HepG2 (cell line): ENCODE measurements at regions of chr13 and their contacts with region 1.

Region 1: GRCh38 chr13:45623515-45624090 is 8.1 kb upstream of the ERICH6B start:
- DNase-seq: peak; percentile 19
- ATAC-seq: peak; percentile 67
- H3K4me3 ChIP-seq: no peak overlapping the region
- H3K27ac ChIP-seq: no peak overlapping the region
- H3K4me1 ChIP-seq: peaks cover 9% of the 10 kb centered on the region
- H3K27me3 ChIP-seq: peaks cover 2 to 3% of the 10 kb centered on the region in 2 experiments; a peak in 1 of 5 replicates
- CTCF ChIP-seq: peak; percentile 64
- EP300 ChIP-seq: no peak
- POLR2A ChIP-seq: no peak
- RAD21 ChIP-seq: no peak

Region 2: GRCh38 chr13:45683701-45684100 is 60.1 kb after region 1 on chr13:
- CTCF ChIA-PET with region 1: no interaction called
- POLR2A ChIA-PET with region 1: no interaction called
- in situ Hi-C with region 1: no loop called
- intact Hi-C with region 1: loop called (anchors 10 kb)
- DNase-seq: no peak
- ATAC-seq: peak; percentile 63
- H3K4me3 ChIP-seq: no peak overlapping the region
- H3K27ac ChIP-seq: no peak overlapping the region
- H3K4me1 ChIP-seq: no peaks in the 10 kb centered on the region
- H3K27me3 ChIP-seq: 0 out of 5 replicates have a peak, but pooled peaks cover 0 to 7% of the 10 kb centered on the region in 2 experiments
- CTCF ChIP-seq: peak; percentile 40
- EP300 ChIP-seq: no peak
- POLR2A ChIP-seq: no peak
- RAD21 ChIP-seq: no peak

Region 3: GRCh38 chr13:45879670-45880069 is 256.1 kb after region 1 on chr13:
- CTCF ChIA-PET with region 1: no interaction called
- POLR2A ChIA-PET with region 1: no interaction called
- in situ Hi-C with region 1: no loop called
- intact Hi-C with region 1: loop called (anchors 5 kb)
- DNase-seq: peak; percentile 39
- ATAC-seq: peak; percentile 98
- H3K4me3 ChIP-seq: no peak overlapping the region
- H3K27ac ChIP-seq: no peak overlapping the region
- H3K4me1 ChIP-seq: no peaks in the 10 kb centered on the region
- H3K27me3 ChIP-seq: no peaks in the 10 kb centered on the region; a peak in 1 of 5 replicates
- CTCF ChIP-seq: peak; percentile 59
- EP300 ChIP-seq: no peak
- POLR2A ChIP-seq: no peak
- RAD21 ChIP-seq: no peak